ENCODE measurements at regions of chr2 and their contacts with region 1.

Region 1: DNA sequence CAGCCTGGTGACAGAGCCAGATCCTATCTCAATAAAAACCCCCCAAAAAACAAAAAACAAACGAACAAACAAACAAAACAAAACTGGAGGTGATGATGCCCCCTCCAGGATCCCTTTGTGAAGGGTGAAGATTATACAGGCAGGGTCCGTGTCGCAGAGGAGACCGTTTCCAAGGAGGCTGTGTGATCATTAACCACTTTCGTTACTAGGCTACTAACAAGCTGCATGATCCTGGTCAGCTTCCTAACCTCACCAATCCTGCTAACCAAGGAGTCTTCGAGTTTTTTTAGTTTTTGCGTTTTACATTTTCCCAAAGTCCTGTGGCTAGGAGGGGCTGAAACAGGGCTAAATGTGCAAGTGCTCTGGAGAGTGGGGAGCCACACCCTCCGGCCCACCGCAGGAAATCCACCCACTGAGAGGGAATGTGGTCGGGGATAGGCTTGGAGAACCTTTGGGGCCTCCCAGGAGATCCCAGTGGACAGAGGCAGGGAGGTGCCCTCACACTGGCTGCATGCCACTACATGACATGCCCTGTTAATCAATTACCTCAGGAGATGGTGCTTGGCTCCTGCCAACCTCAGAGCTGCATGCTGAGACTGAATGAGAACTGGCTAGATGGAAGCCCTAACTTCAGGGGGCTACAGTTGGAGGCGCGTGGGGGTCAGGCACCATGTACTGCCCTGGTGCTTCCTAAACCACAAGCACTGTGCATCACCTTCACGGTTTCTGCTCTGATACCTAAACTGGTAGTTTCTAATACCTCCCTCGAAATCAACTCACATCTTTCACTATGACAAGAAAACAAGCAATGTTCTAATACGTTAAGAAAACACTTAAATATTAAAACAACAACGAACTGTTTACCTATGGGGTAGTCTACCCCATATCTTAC is 67.5 kb upstream of the RGPD5 start:
- DNase-seq: peak in 1 of 2 donors; percentile 56
- H3K4me3 ChIP-seq: no peak overlapping the region
- H3K27ac ChIP-seq: no peak overlapping the region
- H3K4me1 ChIP-seq: peaks cover 15% of the 10 kb centered on the region
- H3K27me3 ChIP-seq: no peaks in the 10 kb centered on the region
- CTCF ChIP-seq: no peak
- POLR2A ChIP-seq: no peak

Region 2: GRCh38 chr2:109545828-109546713 is 180.6 kb before region 1 on chr2:
- intact Hi-C with region 1: loop called (anchors 5 kb)
- DNase-seq: no peak
- H3K4me3 ChIP-seq: no peak overlapping the region
- H3K27ac ChIP-seq: no peak overlapping the region
- H3K4me1 ChIP-seq: no peaks in the 10 kb centered on the region
- H3K27me3 ChIP-seq: no peaks in the 10 kb centered on the region
- CTCF ChIP-seq: peak; percentile 89 to 93 (median 89)
- POLR2A ChIP-seq: no peak

Region 3: GRCh38 chr2:109689182-109689930 is 37.3 kb before region 1 on chr2:
- intact Hi-C with region 1: no loop called
- DNase-seq: no peak
- H3K4me3 ChIP-seq: no peak overlapping the region
- H3K27ac ChIP-seq: peak overlapping the region; percentile 61
- H3K4me1 ChIP-seq: peaks cover 57% of the 10 kb centered on the region
- H3K27me3 ChIP-seq: no peaks in the 10 kb centered on the region
- CTCF ChIP-seq: no peak
- POLR2A ChIP-seq: no peak

Region 4: GRCh38 chr2:110134025-110134424 is 407.4 kb after region 1 on chr2:
- intact Hi-C with region 1: no loop called
- DNase-seq: no peak
- H3K4me3 ChIP-seq: no peak overlapping the region
- H3K27ac ChIP-seq: no peak overlapping the region
- H3K4me1 ChIP-seq: no peaks in the 10 kb centered on the region
- H3K27me3 ChIP-seq: no peaks in the 10 kb centered on the region
- CTCF ChIP-seq: no peak
- POLR2A ChIP-seq: no peak